Heart left ventricle (tissue), 16 donors: ENCODE measurements at regions of chr1 and their contacts with region 1.

Region 1: DNA sequence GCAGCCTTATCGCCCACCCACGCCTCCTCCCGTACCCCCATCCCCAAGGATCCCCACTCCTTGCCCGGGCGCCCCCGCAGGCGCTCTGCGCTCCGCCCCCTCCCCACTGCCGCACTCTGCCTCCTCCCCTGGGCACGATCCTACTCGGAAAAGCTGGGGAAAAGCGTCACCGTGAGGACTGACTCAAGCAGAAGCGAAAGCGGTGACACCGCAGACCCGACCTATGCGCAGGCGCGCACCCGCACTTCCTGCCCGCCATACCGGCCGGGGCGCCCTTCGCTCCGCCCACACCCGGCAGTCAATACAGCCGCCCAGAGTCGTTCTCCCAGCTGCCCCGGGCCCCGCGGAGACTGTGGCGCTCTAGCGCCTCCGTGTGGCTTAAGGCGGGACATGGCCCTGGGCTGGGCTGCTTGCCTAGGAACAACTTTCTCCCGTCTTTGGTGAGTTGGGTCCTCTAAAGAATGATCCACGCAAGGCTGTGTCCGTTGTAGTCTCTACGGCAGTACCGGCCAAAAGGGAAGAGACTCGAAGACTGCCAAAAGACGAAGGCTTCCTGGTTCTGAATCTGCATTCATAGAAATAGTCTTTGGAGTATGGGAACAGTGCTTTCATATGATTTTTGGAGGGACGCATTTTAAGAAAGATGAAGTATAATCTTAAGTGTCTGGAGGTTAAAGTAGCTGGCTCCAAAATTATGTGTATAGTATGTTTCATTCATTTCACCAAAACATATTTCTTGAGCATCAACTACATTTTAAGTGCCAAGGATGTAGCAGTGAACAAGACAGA is at the start of gene OMA1:
- DNase-seq: peak; percentile 97 to 99 (median 99)
- ATAC-seq: peak; percentile 99
- H3K4me3 ChIP-seq: peak within 1 kb of the TSS; percentile 60 to 97 (median 83)
- H3K27ac ChIP-seq: peak within 1 kb of the TSS; percentile 96 to 100 (median 99)
- H3K4me1 ChIP-seq: peaks cover 0 to 17% (median 11%) of the 10 kb centered on the region in 12 donors
- H3K27me3 ChIP-seq: no peaks in the 10 kb centered on the region
- CTCF ChIP-seq: peak; percentile 94 to 99 (median 97)
- POLR2A ChIP-seq: peak in 1 of 2 donors; percentile 83
- total RNA-seq, gene OMA1: 23.5 to 44.5 (median 37.2) TPM

Region 2: GRCh38 chr1:58162952-58163550 is 383.7 kb before region 1 on chr1:
- intact Hi-C with region 1: loop called in 1 of 10 experiments (anchors 10 kb)
- DNase-seq: peak in 4 of 5 donors; percentile 64 to 77 (median 64)
- ATAC-seq: peak; percentile 71 to 95 (median 91)
- H3K4me3 ChIP-seq: no peak overlapping the region
- H3K27ac ChIP-seq: peak overlapping the region in 2 of 12 donors; percentile 25 to 46
- H3K4me1 ChIP-seq: peaks cover 0 to 6% (median 1%) of the 10 kb centered on the region in 12 donors
- H3K27me3 ChIP-seq: no peaks in the 10 kb centered on the region
- CTCF ChIP-seq: peak; percentile 77 to 92 (median 86)
- POLR2A ChIP-seq: no peak

Region 3: DNA sequence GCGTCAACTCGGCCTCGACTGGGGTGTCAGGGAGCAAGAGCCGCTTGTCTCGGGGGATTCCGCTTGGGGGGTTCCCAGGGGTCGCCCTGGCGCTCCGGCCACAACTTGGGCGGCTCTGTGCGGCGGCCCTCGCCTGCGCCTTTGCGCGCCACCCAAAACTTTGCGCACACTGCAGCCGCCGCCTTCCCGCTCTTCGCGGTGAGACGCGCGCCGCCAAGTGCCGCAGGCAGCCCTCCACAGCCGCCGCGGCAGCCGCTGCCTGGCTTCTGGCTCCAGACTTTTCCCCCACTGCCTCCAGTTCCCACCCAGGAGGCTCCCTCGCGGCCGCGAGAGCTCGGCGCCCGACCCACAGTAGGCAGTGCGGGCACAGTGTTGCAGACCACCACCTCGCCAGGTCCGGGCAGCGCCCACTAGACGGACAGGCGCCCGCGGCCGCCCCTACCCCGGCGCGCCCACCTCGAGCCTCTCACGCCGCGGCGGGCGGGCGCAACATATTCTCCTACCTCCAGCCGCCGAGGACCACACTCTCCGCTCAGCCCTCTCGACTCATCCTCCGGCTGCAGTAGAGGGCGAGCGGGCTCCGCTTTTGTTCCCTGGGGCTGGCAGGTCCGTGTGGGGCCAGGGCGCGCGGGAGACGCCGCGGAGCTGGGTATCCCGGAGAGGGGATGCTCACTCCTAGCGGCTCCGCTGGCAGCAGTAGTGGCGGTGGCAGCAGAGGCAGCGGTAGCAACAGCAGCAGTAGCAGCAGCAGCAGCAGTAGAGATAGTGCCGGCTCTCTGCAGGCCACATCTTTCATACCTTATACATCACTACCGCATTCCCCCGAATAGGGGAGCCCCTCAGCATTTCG is 296.8 kb before region 1 on chr1:
- intact Hi-C with region 1: loop called in 1 of 10 experiments (anchors 5 kb)
- DNase-seq: peak; percentile 18 to 68 (median 35)
- ATAC-seq: peak; percentile 71 to 89 (median 87)
- H3K4me3 ChIP-seq: peak overlapping the region; percentile 25 to 55 (median 50)
- H3K27ac ChIP-seq: peak overlapping the region in 1 of 12 donors; percentile 18
- H3K4me1 ChIP-seq: peaks cover 0 to 29% (median 17%) of the 10 kb centered on the region in 12 donors
- H3K27me3 ChIP-seq: peaks cover 0 to 42% (median 6%) of the 10 kb centered on the region in 9 donors
- CTCF ChIP-seq: peak in 3 of 12 donors; percentile 5 to 9 (median 6)
- POLR2A ChIP-seq: no peak

Region 4: GRCh38 chr1:58515794-58516401 is 30.8 kb before region 1 on chr1:
- intact Hi-C with region 1: loop called in 9 of 10 experiments (anchors 1 to 5 kb)
- DNase-seq: peak in 4 of 5 donors; percentile 20 to 35 (median 30)
- ATAC-seq: peak in 2 of 4 donors; percentile 39 to 72
- H3K4me3 ChIP-seq: no peak overlapping the region
- H3K27ac ChIP-seq: no peak overlapping the region
- H3K4me1 ChIP-seq: peaks cover 0 to 14% (median 0%) of the 10 kb centered on the region in 12 donors
- H3K27me3 ChIP-seq: no peaks in the 10 kb centered on the region
- CTCF ChIP-seq: peak; percentile 56 to 82 (median 72)
- POLR2A ChIP-seq: no peak

Region 5: DNA sequence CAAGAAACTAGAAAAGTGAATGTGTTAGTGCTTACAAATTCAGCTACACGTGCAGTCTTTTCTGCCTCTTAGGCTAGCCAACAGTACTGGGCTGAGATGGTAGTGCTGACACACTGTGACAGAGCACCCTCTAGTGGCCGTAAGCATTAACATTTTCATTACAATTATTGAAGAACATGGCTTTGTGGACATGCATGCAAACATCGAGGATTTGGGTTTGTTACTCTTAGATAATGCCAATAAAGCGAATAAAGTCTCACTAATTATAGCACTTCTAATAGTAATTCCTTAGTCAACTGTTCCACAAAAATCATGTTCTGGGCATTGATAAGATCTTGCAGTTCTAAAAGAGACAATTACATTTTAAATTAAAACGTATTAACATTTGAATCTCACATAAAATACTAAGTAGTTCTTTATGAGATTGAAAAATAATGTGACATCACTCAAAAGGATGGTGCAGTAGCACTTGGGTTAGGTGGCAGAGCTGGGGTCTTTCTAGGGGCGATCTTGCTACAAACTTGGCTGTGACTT is 106.0 kb after region 1 on chr1:
- intact Hi-C with region 1: loop called in 7 of 10 experiments (anchors 10 kb)
- DNase-seq: peak in 4 of 5 donors; percentile 35 to 62 (median 49)
- ATAC-seq: peak; percentile 76 to 89 (median 87)
- H3K4me3 ChIP-seq: no peak overlapping the region
- H3K27ac ChIP-seq: no peak overlapping the region
- H3K4me1 ChIP-seq: peaks cover 0 to 7% (median 0%) of the 10 kb centered on the region in 12 donors
- H3K27me3 ChIP-seq: no peaks in the 10 kb centered on the region
- CTCF ChIP-seq: peak; percentile 68 to 94 (median 85)
- POLR2A ChIP-seq: no peak